ENCODE measurements at regions of chr20 and their contacts with region 1.

Region 1: GRCh38 chr20:14986026-14986655 is 648.7 kb upstream of the FLRT3 start:
- DNase-seq: peak; percentile 88 to 93
- H3K4me3 ChIP-seq: no peak overlapping the region
- H3K4me3 Mint-ChIP-seq: peak overlapping the region; percentile 47
- H3K27ac Mint-ChIP-seq: peak overlapping the region; percentile 94
- H3K4me1 ChIP-seq: peaks cover 40% of the 10 kb centered on the region
- H3K4me1 Mint-ChIP-seq: peaks cover 25% of the 10 kb centered on the region
- H3K27me3 ChIP-seq: no peaks in the 10 kb centered on the region
- H3K27me3 Mint-ChIP-seq: no peaks in the 10 kb centered on the region
- CTCF ChIP-seq: no peak

Region 2: GRCh38 chr20:14344746-14345145 is 641.4 kb before region 1 on chr20:
- CTCF ChIA-PET with region 1: no interaction called
- POLR2A ChIA-PET with region 1: no interaction called
- intact Hi-C with region 1: loop called (anchors 2 kb)
- DNase-seq: peak in 1 of 2 experiments; percentile 59
- H3K4me3 ChIP-seq: no peak overlapping the region
- H3K4me3 Mint-ChIP-seq: no peak overlapping the region
- H3K27ac Mint-ChIP-seq: peak overlapping the region; percentile 66
- H3K4me1 ChIP-seq: peaks cover 63% of the 10 kb centered on the region
- H3K4me1 Mint-ChIP-seq: peaks cover 32% of the 10 kb centered on the region
- H3K27me3 ChIP-seq: no peaks in the 10 kb centered on the region
- H3K27me3 Mint-ChIP-seq: no peaks in the 10 kb centered on the region
- CTCF ChIP-seq: no peak

Region 3: DNA sequence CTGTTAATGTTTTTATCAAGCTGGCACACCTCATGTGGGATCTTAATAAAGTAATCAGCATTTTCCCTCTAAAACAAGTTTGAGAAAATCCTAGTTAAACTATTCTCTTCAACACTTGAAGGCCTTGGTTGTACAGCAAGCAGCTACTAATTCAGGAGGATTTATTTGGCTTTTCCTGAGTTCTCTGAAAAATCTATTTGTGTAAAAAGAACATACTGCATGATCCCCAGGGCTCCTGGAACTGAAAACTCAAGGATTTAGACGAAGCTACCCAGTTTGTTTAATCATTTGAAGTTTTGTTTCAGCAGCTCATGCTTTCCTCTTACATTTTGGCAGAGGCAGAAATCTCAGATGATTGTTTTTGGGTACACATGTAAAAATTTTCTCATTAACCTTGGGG is 339.1 kb before region 1 on chr20:
- CTCF ChIA-PET with region 1: no interaction called
- POLR2A ChIA-PET with region 1: no interaction called
- intact Hi-C with region 1: no loop called
- DNase-seq: no peak
- H3K4me3 ChIP-seq: no peak overlapping the region
- H3K4me3 Mint-ChIP-seq: no peak overlapping the region
- H3K27ac Mint-ChIP-seq: peak overlapping the region; percentile 4
- H3K4me1 ChIP-seq: no peaks in the 10 kb centered on the region
- H3K4me1 Mint-ChIP-seq: no peaks in the 10 kb centered on the region
- H3K27me3 ChIP-seq: no peaks in the 10 kb centered on the region
- H3K27me3 Mint-ChIP-seq: no peaks in the 10 kb centered on the region
- CTCF ChIP-seq: no peak

Region 4: DNA sequence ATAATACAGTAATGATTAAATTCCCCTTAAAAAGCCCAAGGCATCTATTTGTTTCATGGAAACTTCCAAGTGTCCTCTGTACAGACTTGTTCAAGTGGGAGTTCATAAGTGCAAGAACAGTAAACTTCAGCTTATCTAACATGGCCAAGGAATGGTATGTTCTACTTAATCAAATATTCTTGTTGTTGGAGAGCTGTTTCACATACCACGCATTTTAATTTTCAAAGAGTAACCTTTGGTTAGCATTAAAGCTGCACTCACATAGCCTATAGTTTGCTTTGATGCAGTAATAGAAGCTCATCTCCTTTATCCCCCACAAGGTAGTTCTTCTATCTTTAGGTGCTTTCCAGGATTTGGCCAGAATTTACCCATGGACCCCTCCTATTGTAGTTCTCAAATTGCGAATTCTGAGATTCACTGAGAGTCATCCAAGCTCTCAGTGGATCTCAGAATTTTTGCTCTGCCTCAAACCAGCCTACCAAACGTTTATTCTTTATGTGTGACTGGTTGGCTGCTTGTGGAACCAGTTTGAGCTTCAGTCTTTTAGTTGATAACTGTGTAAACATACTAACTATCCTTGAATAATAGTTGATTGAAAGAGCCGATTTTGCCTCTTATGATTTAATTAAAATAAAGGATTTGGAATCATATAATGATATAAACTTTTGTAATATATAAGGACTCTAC is 19.3 kb after region 1 on chr20:
- CTCF ChIA-PET with region 1: no interaction called
- POLR2A ChIA-PET with region 1: no interaction called
- intact Hi-C with region 1: loop called (anchors 1 kb)
- DNase-seq: peak; percentile 47 to 54
- H3K4me3 ChIP-seq: no peak overlapping the region
- H3K4me3 Mint-ChIP-seq: no peak overlapping the region
- H3K27ac Mint-ChIP-seq: peak overlapping the region; percentile 80
- H3K4me1 ChIP-seq: peaks cover 32% of the 10 kb centered on the region
- H3K4me1 Mint-ChIP-seq: peaks cover 29% of the 10 kb centered on the region
- H3K27me3 ChIP-seq: no peaks in the 10 kb centered on the region
- H3K27me3 Mint-ChIP-seq: no peaks in the 10 kb centered on the region
- CTCF ChIP-seq: no peak

Region 5: GRCh38 chr20:15045246-15045645 is 59.1 kb after region 1 on chr20:
- CTCF ChIA-PET with region 1: no interaction called
- POLR2A ChIA-PET with region 1: no interaction called
- intact Hi-C with region 1: loop called (anchors 5 kb)
- DNase-seq: no peak
- H3K4me3 ChIP-seq: no peak overlapping the region
- H3K4me3 Mint-ChIP-seq: no peak overlapping the region
- H3K27ac Mint-ChIP-seq: no peak overlapping the region
- H3K4me1 ChIP-seq: no peaks in the 10 kb centered on the region
- H3K4me1 Mint-ChIP-seq: no peaks in the 10 kb centered on the region
- H3K27me3 ChIP-seq: no peaks in the 10 kb centered on the region
- H3K27me3 Mint-ChIP-seq: no peaks in the 10 kb centered on the region
- CTCF ChIP-seq: no peak

Region 6: GRCh38 chr20:15236812-15237211 is 250.7 kb after region 1 on chr20:
- CTCF ChIA-PET with region 1: no interaction called
- POLR2A ChIA-PET with region 1: no interaction called
- intact Hi-C with region 1: loop called (anchors 10 kb)
- DNase-seq: peak; percentile 57 to 64
- H3K4me3 ChIP-seq: no peak overlapping the region
- H3K4me3 Mint-ChIP-seq: no peak overlapping the region
- H3K27ac Mint-ChIP-seq: no peak overlapping the region
- H3K4me1 ChIP-seq: no peaks in the 10 kb centered on the region
- H3K4me1 Mint-ChIP-seq: peaks cover 7% of the 10 kb centered on the region
- H3K27me3 ChIP-seq: no peaks in the 10 kb centered on the region
- H3K27me3 Mint-ChIP-seq: no peaks in the 10 kb centered on the region
- CTCF ChIP-seq: peak; percentile 42 to 51

Measured in Caco-2 (cell line).